K562 (cell line): ENCODE measurements at regions of chr12 and their contacts with region 1.

Region 1: DNA sequence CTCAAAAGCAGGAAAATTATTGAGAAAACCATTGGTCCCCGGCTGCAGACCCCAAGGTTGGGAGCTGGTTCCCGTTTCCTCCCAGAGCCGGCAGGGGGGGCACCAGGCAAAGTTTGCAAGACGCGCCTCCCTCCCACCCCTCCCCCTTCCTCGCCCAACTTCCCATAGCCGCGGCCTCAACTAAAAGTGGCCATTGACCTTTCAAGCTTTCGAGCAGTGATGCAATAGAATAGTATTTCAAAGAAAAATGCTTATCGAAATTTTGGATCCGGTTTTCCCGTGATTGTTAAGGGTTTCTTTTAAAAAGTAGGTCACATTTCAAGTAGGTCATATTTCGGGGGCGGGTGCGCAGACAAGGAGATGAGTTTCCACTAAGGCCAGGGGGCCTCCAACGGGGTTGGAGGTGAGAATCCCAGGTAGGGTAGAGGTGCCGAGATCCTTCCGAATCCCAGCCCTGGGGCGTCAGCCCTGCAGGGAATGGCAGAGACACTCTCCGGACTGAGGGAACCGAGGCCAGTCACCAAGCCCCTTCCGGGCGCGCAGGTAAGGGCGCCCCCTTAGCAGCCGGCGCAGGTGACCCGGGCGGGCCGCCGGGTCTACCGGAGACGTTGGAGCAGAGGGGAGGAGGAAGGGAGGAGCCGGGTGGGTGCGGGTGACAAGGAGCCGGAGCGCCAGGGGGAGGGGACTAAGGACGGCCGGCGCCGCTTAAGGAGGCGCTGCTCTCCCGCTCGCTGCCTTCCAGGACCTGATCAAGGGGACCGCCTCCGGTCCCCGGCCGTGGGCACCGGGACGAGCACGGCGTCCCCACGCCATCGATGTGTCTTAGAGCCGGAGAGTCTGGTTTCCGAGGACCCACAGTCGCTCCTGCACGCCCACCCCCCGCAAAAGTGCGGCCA is 2.6 kb upstream of the SOCS2 start:
- DNase-seq: peak; percentile 85 to 98 (median 90)
- ATAC-seq: peak; percentile 80
- H3K4me3 ChIP-seq: peak overlapping the region; percentile 93
- H3K27ac ChIP-seq: peak overlapping the region; percentile 96
- H3K4me1 ChIP-seq: peaks cover 11 to 47% of the 10 kb centered on the region in 2 experiments; a peak in 4 of 5 replicates
- H3K27me3 ChIP-seq: no peaks in the 10 kb centered on the region
- CTCF ChIP-seq: peak; percentile 74 to 84 (median 83)
- EP300 ChIP-seq: peak; percentile 84
- POLR2A ChIP-seq: no peak
- RAD21 ChIP-seq: peak; percentile 76 to 86

Region 2: DNA sequence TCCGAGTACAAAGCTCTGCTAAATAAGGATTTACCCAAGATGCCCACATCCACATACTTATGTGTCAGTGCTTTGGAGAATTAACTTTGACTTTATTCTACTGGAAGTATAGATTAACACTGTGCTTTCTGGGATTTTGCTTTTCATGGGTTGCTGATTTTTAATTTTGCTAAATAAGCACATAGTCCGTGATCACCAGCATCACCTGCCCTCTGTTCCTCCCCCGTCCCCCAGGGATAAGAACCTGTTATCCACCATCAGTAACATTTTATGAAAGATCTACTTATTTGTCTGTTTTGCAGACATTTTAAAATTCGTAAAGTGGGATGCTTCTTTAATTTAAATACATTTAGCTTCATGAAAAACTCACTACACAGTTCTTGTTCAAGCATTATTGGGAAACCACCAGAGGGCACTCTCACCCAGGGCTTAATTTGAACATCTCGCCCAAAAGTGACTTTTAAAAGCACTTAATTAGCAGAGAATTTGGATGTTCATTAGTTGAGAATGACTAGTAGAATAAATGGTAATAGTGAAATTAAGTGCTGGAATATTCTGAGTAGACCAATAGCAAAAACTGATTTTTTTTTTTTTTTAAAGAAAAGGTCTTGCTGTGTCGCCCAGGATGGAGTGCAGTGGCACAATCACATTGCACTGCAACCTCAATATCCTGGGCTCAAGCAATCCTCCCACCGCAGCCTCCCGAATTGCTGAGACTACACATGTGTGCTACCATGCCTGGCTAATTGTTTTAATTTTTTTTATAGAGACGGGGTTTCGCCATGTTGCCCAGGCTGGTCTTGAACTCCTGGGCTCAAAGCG is 66.9 kb before region 1 on chr12:
- CTCF ChIA-PET with region 1: interaction called, 4 read pairs
- POLR2A ChIA-PET with region 1: no interaction called
- in situ Hi-C with region 1: no loop called
- intact Hi-C with region 1: loop called (anchors 2 kb)
- DNase-seq: peak in 2 of 4 experiments; percentile 20 to 64
- ATAC-seq: peak; percentile 76
- H3K4me3 ChIP-seq: no peak overlapping the region
- H3K27ac ChIP-seq: no peak overlapping the region
- H3K4me1 ChIP-seq: no peaks in the 10 kb centered on the region
- H3K27me3 ChIP-seq: no peaks in the 10 kb centered on the region
- CTCF ChIP-seq: peak; percentile 49 to 85 (median 71); a peak in 5 of 6 replicates
- EP300 ChIP-seq: no peak
- POLR2A ChIP-seq: no peak
- RAD21 ChIP-seq: peak; percentile 90 to 92

Region 3: GRCh38 chr12:93585247-93585646 is 15.3 kb after region 1 on chr12:
- CTCF ChIA-PET with region 1: no interaction called
- POLR2A ChIA-PET with region 1: interaction called, 22 read pairs
- in situ Hi-C with region 1: no loop called
- intact Hi-C with region 1: no loop called
- DNase-seq: no peak
- ATAC-seq: no peak
- H3K4me3 ChIP-seq: no peak overlapping the region
- H3K27ac ChIP-seq: no peak overlapping the region
- H3K4me1 ChIP-seq: no peaks in the 10 kb centered on the region; a peak in 3 of 5 replicates
- H3K27me3 ChIP-seq: no peaks in the 10 kb centered on the region
- CTCF ChIP-seq: no peak
- EP300 ChIP-seq: no peak
- POLR2A ChIP-seq: no peak
- RAD21 ChIP-seq: no peak

Region 4: DNA sequence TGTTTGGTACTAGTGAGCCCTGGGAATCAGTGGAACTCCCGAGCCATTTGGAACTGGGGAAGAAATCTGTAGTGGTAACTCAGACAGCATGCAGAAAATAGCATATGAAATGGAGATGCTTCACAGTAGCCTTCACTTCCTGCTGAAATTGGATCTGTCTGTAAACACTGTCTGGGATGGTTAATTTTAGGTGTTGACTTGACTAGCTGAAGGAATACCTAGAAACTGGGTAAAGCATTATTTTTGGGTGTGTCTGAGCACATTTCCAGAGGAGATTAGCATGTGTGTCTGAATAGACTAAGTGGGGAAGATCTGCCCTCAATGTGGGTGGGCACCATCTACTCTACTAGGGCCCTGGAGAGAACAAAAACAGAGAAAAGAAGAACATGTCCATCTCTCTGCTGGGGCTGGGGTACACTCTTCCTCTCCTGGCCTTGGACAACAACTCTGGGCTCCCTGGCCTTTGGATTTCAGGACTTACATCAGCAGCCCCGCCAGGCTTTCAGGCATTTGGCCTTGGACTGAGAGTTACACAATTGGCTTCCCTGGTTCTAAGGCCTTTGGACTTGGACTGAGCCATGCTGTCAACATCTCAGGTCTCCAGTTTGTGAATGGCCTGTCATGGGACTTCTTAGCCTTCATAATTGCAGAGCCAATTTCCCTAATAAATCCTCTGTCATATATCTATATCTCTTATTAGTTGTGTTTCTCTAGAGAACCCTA is 93.3 kb after region 1 on chr12:
- CTCF ChIA-PET with region 1: no interaction called
- POLR2A ChIA-PET with region 1: no interaction called
- in situ Hi-C with region 1: no loop called
- intact Hi-C with region 1: no loop called
- DNase-seq: no peak
- ATAC-seq: peak; percentile 43
- H3K4me3 ChIP-seq: no peak overlapping the region
- H3K27ac ChIP-seq: no peak overlapping the region
- H3K4me1 ChIP-seq: peaks cover 0 to 19% of the 10 kb centered on the region in 2 experiments; a peak in 3 of 5 replicates
- H3K27me3 ChIP-seq: no peaks in the 10 kb centered on the region
- CTCF ChIP-seq: no peak
- EP300 ChIP-seq: no peak
- POLR2A ChIP-seq: no peak
- RAD21 ChIP-seq: no peak

Region 5: GRCh38 chr12:93677195-93678064 is 107.5 kb after region 1 on chr12 and contains the start of gene CRADD:
- CTCF ChIA-PET with region 1: no interaction called
- POLR2A ChIA-PET with region 1: interaction called, 6 read pairs
- in situ Hi-C with region 1: no loop called
- intact Hi-C with region 1: loop called (anchors 1 kb)
- DNase-seq: peak; percentile 76 to 96 (median 79)
- ATAC-seq: peak; percentile 85
- H3K4me3 ChIP-seq: peak within 1 kb of the TSS; percentile 60
- H3K27ac ChIP-seq: peak within 1 kb of the TSS; percentile 95
- H3K4me1 ChIP-seq: peaks cover 15 to 37% of the 10 kb centered on the region in 2 experiments; a peak in 4 of 5 replicates
- H3K27me3 ChIP-seq: no peaks in the 10 kb centered on the region
- CTCF ChIP-seq: no peak
- EP300 ChIP-seq: peak; percentile 30; the same call in 1 of the 2 replicates
- POLR2A ChIP-seq: peak; percentile 90
- RAD21 ChIP-seq: no peak; a peak in 1 of 4 replicates
- polyA plus RNA-seq, gene CRADD: 20.5 to 24.9 TPM

Region 6: DNA sequence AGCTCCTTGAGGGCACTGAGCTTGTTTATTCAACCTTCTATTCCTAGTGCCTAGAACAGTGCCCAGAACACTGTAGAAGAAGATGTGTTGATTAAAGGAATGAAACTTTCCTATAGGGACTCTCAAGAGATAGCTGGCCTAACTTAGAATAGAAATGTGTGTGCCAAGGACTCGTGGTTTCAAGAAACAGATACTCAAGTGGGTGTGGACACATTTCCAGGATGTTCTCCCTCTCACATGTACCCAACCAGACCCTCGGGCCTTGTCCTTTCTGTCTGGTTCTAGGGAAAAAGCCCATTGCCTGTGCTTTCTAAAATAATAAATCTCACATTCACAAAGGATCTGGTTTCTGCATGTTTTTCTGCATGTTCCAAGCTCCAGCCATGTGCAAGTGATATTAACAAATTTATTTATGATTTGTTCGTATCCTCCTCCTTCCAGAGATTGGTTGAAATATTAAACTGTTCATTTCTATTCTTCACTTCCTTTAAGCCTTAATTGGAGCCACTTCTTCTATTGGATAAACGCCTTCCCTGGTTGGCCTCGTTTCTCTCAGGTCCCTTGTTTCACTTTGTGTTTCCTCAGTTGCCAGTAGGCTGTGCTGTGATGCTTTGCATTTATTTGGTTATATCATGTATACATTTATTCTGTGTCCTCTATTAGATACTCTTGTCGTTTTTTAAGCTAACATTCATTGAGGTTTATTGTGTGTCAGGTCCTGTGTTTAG is 197.1 kb after region 1 on chr12:
- CTCF ChIA-PET with region 1: interaction called, 3 read pairs
- POLR2A ChIA-PET with region 1: interaction called, 9 read pairs
- in situ Hi-C with region 1: no loop called
- intact Hi-C with region 1: loop called (anchors 1 kb)
- DNase-seq: peak in 1 of 4 experiments; percentile 61
- ATAC-seq: peak; percentile 62
- H3K4me3 ChIP-seq: no peak overlapping the region
- H3K27ac ChIP-seq: no peak overlapping the region
- H3K4me1 ChIP-seq: peaks cover 4 to 28% of the 10 kb centered on the region in 2 experiments; a peak in 4 of 5 replicates
- H3K27me3 ChIP-seq: no peaks in the 10 kb centered on the region
- CTCF ChIP-seq: peak; percentile 51 to 78 (median 61); a peak in 5 of 6 replicates
- EP300 ChIP-seq: no peak
- POLR2A ChIP-seq: no peak
- RAD21 ChIP-seq: peak; percentile 90 to 93